ENCODE measurements at regions of chr22 and their contacts with region 1.

Region 1: GRCh38 chr22:44684506-44685383 is 17.3 kb upstream of the PRR5 start:
- DNase-seq: peak; percentile 50
- H3K4me3 ChIP-seq: no peak overlapping the region
- CTCF ChIP-seq: peak; percentile 100

Region 2: GRCh38 chr22:44658311-44658953 is 26.3 kb before region 1 on chr22:
- CTCF ChIA-PET with region 1: interaction called, 23 read pairs
- POLR2A ChIA-PET with region 1: no interaction called
- DNase-seq: peak; percentile 24
- H3K4me3 ChIP-seq: no peak overlapping the region
- CTCF ChIP-seq: no peak

Region 3: DNA sequence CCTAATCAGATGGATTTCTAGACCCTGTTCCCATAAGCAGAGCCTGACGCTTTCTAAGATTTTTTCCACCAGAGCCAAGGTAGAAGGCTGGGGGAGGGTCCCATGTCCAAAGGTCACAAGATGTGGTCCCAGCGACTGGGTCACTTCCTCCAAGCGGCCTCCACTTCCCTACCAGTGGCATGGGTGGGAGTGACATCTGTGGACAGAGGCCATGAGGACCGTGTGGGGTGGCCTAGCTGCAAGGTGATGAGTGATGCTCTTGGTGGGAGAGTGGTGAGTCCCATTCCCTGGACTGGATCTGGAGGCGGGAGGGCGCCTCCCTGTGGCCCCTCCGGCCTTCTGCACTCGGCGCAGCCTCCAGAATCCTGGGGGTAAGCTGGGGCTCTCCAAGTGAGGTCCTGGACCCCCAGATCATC is 15.2 kb before region 1 on chr22:
- CTCF ChIA-PET with region 1: interaction called, 60 read pairs
- POLR2A ChIA-PET with region 1: interaction called, 4 read pairs
- DNase-seq: no peak
- H3K4me3 ChIP-seq: peak overlapping the region; percentile 51
- CTCF ChIP-seq: peak; percentile 49

Region 4: GRCh38 chr22:44701824-44702478 is 17.2 kb after region 1 on chr22 and contains the start of gene PRR5:
- CTCF ChIA-PET with region 1: interaction called, 125 read pairs
- POLR2A ChIA-PET with region 1: no interaction called
- DNase-seq: peak; percentile 63
- H3K4me3 ChIP-seq: peak within 1 kb of the TSS; percentile 65
- CTCF ChIP-seq: no peak

Region 5: DNA sequence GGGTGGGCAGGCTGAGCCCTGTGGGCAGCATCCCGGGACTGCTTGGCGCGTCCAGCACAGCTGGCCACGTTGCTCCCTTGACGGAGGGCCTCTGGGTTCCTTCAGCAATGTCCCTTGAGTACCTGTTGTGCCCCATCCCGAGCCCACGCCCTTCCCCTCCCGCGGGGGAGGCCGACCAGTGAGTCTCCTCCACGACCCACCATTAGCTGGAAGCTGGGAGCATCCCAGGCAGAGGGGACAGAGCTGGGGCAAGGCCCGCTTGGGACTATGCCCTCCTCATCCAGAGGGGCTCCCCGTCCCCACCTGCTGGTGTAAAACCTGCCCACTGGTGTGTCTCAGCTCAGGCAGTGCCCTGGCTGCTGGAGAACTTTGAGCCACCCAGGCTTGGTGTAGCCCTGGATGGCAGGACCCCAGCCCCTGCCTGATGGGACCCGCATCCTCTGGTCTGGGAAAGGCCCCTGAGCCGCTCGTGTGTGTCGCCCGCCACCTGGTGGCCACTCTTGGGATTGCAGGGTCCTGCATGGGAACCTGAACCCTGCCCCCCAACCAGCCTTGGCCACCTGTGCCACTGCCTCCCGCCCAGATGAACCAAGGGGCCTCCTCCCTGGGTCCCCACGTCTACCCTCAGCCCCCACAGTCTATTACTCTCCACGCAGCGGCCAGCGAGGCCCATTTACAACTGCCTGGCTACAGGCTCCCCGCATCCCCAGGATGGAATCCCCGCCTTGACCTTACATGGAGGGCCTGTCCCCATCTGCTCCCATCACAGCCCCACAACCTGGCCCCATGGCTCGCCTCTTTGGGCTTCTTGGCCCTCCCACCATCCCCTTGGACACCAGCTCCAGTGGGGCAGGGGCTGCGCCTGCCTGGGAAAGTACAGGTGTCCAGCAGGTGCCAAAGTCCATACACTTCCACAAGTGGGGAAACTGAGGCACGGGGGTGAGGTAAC is 51.1 kb after region 1 on chr22:
- CTCF ChIA-PET with region 1: interaction called, 470 read pairs
- POLR2A ChIA-PET with region 1: no interaction called
- DNase-seq: no peak
- H3K4me3 ChIP-seq: no peak overlapping the region
- CTCF ChIP-seq: peak; percentile 96